A549 (cell line): ENCODE measurements at regions of chr18 and their contacts with region 1.

Region 1: DNA sequence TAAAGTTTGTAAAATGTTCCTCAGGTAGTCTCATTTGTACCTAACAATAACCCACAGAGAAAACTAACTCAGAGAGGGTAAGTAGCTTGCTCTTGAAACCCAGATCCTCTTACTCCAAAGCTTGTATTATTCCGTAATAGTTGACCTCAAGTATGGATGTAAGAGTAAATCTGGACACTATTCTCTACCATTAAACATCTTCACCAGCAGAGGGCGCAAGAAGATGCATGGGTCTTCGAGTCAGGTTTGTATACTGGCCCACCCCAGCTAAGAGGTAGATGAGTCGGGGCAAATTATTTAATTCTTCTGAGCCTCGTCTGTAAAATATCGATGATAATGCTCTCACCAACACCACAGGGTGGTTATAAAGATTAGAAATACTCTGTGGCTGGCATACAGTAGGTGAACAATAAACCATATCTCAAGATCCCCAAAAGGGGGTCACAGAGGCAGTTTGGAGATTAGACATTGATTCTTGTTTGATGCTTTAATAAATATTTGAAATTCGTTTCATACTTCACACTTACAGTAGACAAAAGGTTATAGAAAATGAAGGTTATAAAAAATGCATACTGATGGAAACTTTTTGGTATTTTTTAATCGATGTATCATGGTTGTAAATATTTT is 3.5 kb upstream of the CABLES1 start:
- DNase-seq: peak; percentile 56 to 76
- ATAC-seq: peak in 1 of 2 experiments; percentile 57; a peak in 3 of 6 replicates
- H3K4me3 ChIP-seq: no peak overlapping the region
- H3K27ac ChIP-seq: peak overlapping the region in 1 of 2 experiments; percentile 27; a peak in 1 of 6 replicates
- H3K4me1 ChIP-seq: peaks cover 27% of the 10 kb centered on the region
- CTCF ChIP-seq: peak; percentile 79
- EP300 ChIP-seq: no peak
- POLR2A ChIP-seq: no peak
- RAD21 ChIP-seq: peak; percentile 66 to 71

Region 2: DNA sequence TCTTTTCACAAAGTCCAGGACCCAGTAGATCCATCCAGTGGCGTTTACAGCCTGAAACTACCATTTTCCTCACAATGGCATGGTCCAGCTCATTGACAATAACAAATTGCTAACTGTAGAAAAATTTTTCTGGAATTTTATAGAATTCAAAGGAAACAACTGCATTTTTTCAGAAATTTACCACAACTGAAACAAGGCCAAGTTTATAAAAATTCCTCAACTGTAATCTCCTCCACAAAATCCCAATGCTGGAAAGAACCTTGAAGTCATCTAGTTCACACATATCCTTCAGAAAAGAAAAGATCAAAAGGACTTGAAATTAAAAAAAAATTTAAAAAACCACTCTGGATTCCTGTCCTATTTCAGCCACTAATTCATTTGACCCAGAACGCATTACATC is 488.1 kb before region 1 on chr18:
- CTCF ChIA-PET with region 1: no interaction called
- POLR2A ChIA-PET with region 1: no interaction called
- DNase-seq: no peak
- ATAC-seq: no peak
- H3K4me3 ChIP-seq: no peak overlapping the region
- H3K27ac ChIP-seq: no peak overlapping the region
- H3K4me1 ChIP-seq: peaks cover 24% of the 10 kb centered on the region
- CTCF ChIP-seq: no peak
- EP300 ChIP-seq: no peak
- POLR2A ChIP-seq: no peak
- RAD21 ChIP-seq: no peak

Region 3: GRCh38 chr18:23077493-23078256 is 54.1 kb before region 1 on chr18:
- CTCF ChIA-PET with region 1: interaction called, 21 read pairs
- POLR2A ChIA-PET with region 1: no interaction called
- DNase-seq: peak; percentile 18 to 73
- ATAC-seq: peak; percentile 89 to 96; a peak in 5 of 6 replicates
- H3K4me3 ChIP-seq: no peak overlapping the region
- H3K27ac ChIP-seq: peak overlapping the region; percentile 68 to 77
- H3K4me1 ChIP-seq: peaks cover 17% of the 10 kb centered on the region
- CTCF ChIP-seq: peak; percentile 47
- EP300 ChIP-seq: no peak
- POLR2A ChIP-seq: no peak
- RAD21 ChIP-seq: peak; percentile 77 to 78

Region 4: DNA sequence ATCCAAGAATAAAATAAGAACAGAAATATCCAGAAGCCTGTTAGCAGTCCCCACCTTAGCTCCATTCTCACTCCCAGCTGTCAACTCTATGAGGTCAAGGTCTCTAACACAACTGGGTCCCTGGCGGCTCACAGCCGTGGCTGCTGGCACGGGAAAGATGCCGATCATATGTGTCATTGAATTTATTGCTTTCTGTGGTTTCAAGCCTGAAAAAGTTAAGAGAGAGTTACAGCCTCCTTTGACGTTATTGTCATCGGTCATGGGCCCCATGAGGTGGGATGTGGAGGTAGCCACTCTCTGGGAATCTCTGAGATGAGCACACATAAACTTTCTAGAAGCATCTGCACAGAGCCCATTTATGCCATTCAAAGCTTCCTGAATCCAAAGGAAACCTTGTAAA is 25.2 kb before region 1 on chr18:
- CTCF ChIA-PET with region 1: interaction called, 15 read pairs
- POLR2A ChIA-PET with region 1: interaction called, 8 read pairs
- DNase-seq: peak; percentile 67 to 93
- ATAC-seq: peak; percentile 85 to 93
- H3K4me3 ChIP-seq: no peak overlapping the region
- H3K27ac ChIP-seq: peak overlapping the region; percentile 69 to 86
- H3K4me1 ChIP-seq: peaks cover 62% of the 10 kb centered on the region
- CTCF ChIP-seq: no peak
- EP300 ChIP-seq: peak; percentile 65 to 86; a peak in 3 of 5 replicates
- POLR2A ChIP-seq: no peak
- RAD21 ChIP-seq: peak; percentile 30 to 39; a peak in 2 of 5 replicates

Region 5: GRCh38 chr18:23114171-23114881 is 17.5 kb before region 1 on chr18:
- CTCF ChIA-PET with region 1: interaction called, 22 read pairs
- POLR2A ChIA-PET with region 1: no interaction called
- DNase-seq: no peak
- ATAC-seq: peak; percentile 3 to 9; a peak in 2 of 6 replicates
- H3K4me3 ChIP-seq: no peak overlapping the region; the same call in 2 of the 3 replicates
- H3K27ac ChIP-seq: peak overlapping the region; percentile 81 to 86
- H3K4me1 ChIP-seq: peaks cover 36% of the 10 kb centered on the region
- CTCF ChIP-seq: no peak
- EP300 ChIP-seq: no peak
- POLR2A ChIP-seq: no peak
- RAD21 ChIP-seq: no peak

Region 6: GRCh38 chr18:23121133-23121532 is 10.7 kb before region 1 on chr18:
- CTCF ChIA-PET with region 1: interaction called, 22 read pairs
- POLR2A ChIA-PET with region 1: no interaction called
- DNase-seq: no peak
- ATAC-seq: no peak
- H3K4me3 ChIP-seq: no peak overlapping the region
- H3K27ac ChIP-seq: no peak overlapping the region
- H3K4me1 ChIP-seq: peaks cover 8% of the 10 kb centered on the region
- CTCF ChIP-seq: no peak
- EP300 ChIP-seq: no peak
- POLR2A ChIP-seq: no peak
- RAD21 ChIP-seq: no peak

Region 7: DNA sequence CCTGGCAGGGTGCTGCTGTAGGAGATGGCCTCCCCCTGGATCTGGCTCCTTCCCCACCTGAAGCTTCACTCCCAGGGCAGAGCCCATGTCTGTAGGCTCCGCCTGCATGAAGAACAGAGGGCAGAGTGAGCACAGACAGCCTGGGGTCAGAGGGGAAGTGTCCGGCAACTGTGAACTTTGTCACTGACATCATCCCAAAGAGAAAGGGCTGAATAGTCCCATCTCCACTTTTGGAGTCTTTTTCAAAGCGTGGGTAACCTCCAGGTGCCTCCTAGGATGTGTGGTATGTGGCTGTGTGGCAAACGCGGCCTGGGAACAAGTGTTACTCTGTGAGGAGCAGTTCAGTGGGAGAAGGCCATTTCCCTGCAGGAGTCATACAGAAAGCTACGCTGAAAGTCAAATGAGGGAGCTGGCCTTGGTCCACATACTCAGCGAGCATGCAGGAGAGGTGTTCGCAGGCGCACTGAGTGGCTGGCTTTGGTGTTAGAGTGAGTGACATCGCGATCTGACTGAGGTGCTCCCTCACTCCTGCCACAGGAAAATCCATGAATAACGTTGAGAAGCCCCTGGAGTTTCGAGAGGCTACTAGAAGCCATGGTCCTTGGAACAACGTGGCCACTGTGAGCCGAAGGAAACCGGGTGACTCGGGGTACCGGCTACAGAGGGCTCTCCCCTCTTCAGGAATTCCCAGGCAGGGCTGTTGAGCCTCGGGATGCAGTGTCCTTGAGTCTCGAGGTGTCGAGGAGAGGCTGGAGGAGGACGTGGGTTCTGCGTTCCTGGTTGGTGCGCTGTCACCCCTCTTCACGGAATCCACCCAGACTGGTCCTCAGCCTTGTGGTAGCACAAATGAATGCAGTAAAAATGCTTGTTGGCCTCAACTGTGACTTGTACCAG is 58.2 kb after region 1 on chr18:
- CTCF ChIA-PET with region 1: no interaction called
- POLR2A ChIA-PET with region 1: no interaction called
- DNase-seq: no peak
- ATAC-seq: no peak
- H3K4me3 ChIP-seq: no peak overlapping the region
- H3K27ac ChIP-seq: no peak overlapping the region
- H3K4me1 ChIP-seq: no peaks in the 10 kb centered on the region
- CTCF ChIP-seq: no peak
- EP300 ChIP-seq: no peak
- POLR2A ChIP-seq: no peak
- RAD21 ChIP-seq: no peak

Region 8: GRCh38 chr18:23350188-23350587 is 218.4 kb after region 1 on chr18:
- CTCF ChIA-PET with region 1: no interaction called
- POLR2A ChIA-PET with region 1: no interaction called
- DNase-seq: no peak
- ATAC-seq: no peak
- H3K4me3 ChIP-seq: no peak overlapping the region
- H3K27ac ChIP-seq: no peak overlapping the region
- H3K4me1 ChIP-seq: no peaks in the 10 kb centered on the region
- CTCF ChIP-seq: no peak
- EP300 ChIP-seq: no peak
- POLR2A ChIP-seq: no peak
- RAD21 ChIP-seq: no peak

Region 9: GRCh38 chr18:23377669-23378301 is 246.0 kb after region 1 on chr18:
- CTCF ChIA-PET with region 1: interaction called, 10 read pairs
- POLR2A ChIA-PET with region 1: interaction called, 3 read pairs
- DNase-seq: peak; percentile 34 to 51
- ATAC-seq: peak; percentile 64 to 79; a peak in 5 of 6 replicates
- H3K4me3 ChIP-seq: no peak overlapping the region
- H3K27ac ChIP-seq: peak overlapping the region; percentile 61 to 83
- H3K4me1 ChIP-seq: peaks cover 36% of the 10 kb centered on the region
- CTCF ChIP-seq: no peak
- EP300 ChIP-seq: no peak
- POLR2A ChIP-seq: no peak
- RAD21 ChIP-seq: no peak

Region 10: DNA sequence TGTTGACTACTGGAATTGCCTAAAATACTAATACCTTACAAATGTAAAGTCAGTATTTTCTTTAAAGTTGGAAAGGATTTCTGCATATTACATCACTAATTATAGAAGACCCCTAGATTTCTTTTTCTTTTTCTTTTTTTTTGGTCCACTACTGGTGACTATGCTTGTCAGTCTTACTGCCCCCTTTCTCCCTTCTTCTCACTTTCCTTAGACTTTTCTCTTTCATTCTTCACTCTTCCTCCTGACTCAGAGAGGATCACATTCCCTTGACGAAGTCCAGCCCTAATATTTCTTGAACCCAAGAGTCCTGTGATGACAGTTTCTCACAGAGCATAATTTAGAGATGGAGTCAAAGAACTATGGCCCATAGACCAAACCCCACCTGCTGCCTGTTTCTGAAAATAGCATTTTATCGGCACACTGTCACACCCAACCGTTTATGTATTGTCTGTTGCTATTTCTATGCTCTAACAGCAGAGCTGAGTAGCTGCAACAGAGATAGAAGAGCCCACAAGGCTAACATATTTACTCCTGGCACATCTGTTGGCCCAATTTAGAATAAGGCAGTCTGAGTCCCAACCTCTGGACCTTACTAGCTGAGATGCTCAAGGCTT is 280.7 kb after region 1 on chr18:
- CTCF ChIA-PET with region 1: interaction called, 17 read pairs
- POLR2A ChIA-PET with region 1: interaction called, 3 read pairs
- DNase-seq: no peak
- ATAC-seq: peak in 1 of 2 experiments; percentile 50; a peak in 2 of 6 replicates
- H3K4me3 ChIP-seq: no peak overlapping the region
- H3K27ac ChIP-seq: no peak overlapping the region
- H3K4me1 ChIP-seq: peaks cover 6% of the 10 kb centered on the region; the same call in 1 of the 3 replicates
- CTCF ChIP-seq: no peak
- EP300 ChIP-seq: no peak
- POLR2A ChIP-seq: no peak
- RAD21 ChIP-seq: no peak